Panc1 (cell line): ENCODE measurements at regions of chr11 and their contacts with region 1.

Region 1: DNA sequence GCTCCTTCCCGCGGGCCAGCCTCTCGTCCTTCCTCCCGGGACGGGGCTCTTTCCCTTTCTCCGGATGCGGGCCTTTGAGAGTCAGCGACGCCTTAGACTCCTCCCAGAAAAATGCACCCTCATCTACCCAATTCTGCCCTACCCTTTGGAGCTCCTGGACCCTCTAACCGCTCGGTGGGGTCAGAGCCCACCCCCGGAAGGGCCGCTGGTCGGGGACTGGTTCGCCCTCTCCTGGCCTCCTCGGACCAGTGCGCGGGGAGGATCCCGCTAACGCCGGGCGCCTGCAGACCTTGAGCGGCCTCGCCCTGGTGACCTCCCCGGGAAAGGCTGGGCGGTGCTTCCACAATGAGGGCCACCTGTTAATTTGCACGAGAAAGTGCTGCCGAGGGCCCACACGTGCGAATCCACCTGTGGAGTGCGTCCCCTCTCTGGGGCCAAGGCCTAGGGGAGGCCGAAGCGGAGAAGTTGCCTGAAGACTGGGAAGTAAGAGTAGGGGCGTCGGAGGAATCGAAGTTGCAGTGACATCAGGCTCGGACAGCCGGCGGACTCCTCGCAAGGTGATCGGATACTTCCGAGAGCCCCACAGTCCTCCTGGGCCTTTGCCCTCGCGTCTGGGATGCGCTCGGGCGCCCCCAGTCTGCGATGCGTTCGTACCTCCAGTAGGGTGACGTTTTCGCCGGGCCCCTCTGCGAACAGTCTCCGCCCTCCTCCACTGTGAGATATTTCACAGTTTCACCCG is 61.5 kb downstream of the ENDOD1 start:
- DNase-seq: peak; percentile 86
- ATAC-seq: peak; percentile 89
- H3K4me3 ChIP-seq: peak overlapping the region; percentile 57 to 70
- H3K27ac ChIP-seq: peak overlapping the region; percentile 70
- H3K4me1 ChIP-seq: peaks cover 23% of the 10 kb centered on the region
- H3K27me3 ChIP-seq: no peaks in the 10 kb centered on the region
- CTCF ChIP-seq: peak; percentile 97

Region 2: GRCh38 chr11:94973099-94973968 is 177.8 kb before region 1 on chr11 and contains the starts of genes CWC15 and KDM4D:
- CTCF ChIA-PET with region 1: no interaction called
- POLR2A ChIA-PET with region 1: no interaction called
- in situ Hi-C with region 1: no loop called
- intact Hi-C with region 1: loop called (anchors 10 kb)
- DNase-seq: peak; percentile 75
- ATAC-seq: peak; percentile 100
- H3K4me3 ChIP-seq: peak within 1 kb of the TSS; percentile 93
- H3K27ac ChIP-seq: peak within 1 kb of the TSS; percentile 99
- H3K4me1 ChIP-seq: peaks cover 10% of the 10 kb centered on the region; the same call in 1 of the 2 replicates
- H3K27me3 ChIP-seq: no peaks in the 10 kb centered on the region
- CTCF ChIP-seq: no peak
- total RNA-seq, gene CWC15: 58.9 TPM
- total RNA-seq, gene KDM4D: 0.87 TPM

Region 3: GRCh38 chr11:95067039-95067840 is 83.9 kb before region 1 on chr11:
- CTCF ChIA-PET with region 1: interaction called, 3 read pairs
- POLR2A ChIA-PET with region 1: no interaction called
- in situ Hi-C with region 1: no loop called
- intact Hi-C with region 1: loop called (anchors 2 kb)
- DNase-seq: peak; percentile 36
- ATAC-seq: peak; percentile 88
- H3K4me3 ChIP-seq: peak overlapping the region; percentile 83 to 90
- H3K27ac ChIP-seq: peak overlapping the region; percentile 94
- H3K4me1 ChIP-seq: peaks cover 8% of the 10 kb centered on the region; the same call in 1 of the 2 replicates
- H3K27me3 ChIP-seq: peaks cover under 1% of the 10 kb centered on the region; the same call in 1 of the 2 replicates
- CTCF ChIP-seq: peak; percentile 64

Region 4: DNA sequence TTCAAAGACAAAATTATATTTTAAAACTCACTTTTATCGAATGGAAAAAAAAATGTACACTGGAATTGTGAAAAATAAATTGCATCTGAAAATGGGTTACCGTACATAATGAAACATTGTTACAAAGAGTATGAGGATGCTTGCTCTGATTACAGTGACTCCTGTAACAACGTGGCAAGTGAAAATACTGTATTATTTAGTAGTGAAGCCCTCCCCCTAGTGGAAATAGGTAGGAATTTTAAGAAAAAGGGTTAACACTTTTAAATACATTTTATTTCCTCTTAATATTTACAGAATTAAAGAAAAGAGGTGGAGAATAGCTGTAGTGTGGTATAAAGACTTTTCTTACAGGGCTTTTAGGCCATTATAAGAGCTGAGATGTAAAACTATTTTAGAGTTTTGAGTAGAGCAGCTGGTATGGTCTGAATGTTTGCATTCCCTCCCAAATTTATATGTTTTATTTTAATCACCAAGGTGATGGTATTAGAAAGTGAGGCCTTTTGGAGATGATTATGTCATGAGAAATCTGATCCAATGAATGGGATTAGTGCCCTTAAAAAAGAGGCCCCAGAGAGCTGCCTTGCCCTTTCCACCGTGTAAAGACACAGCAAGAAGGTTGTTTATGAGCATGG is 613.3 kb after region 1 on chr11:
- CTCF ChIA-PET with region 1: interaction called, 4 read pairs
- POLR2A ChIA-PET with region 1: no interaction called
- in situ Hi-C with region 1: no loop called
- intact Hi-C with region 1: loop called (anchors 1 kb)
- DNase-seq: no peak
- ATAC-seq: peak; percentile 76; the same call in 1 of the 2 replicates
- H3K4me3 ChIP-seq: no peak overlapping the region
- H3K27ac ChIP-seq: no peak overlapping the region
- H3K4me1 ChIP-seq: no peaks in the 10 kb centered on the region
- H3K27me3 ChIP-seq: peaks cover 6% of the 10 kb centered on the region; the same call in 1 of the 2 replicates
- CTCF ChIP-seq: peak; percentile 74; the same call in 1 of the 2 replicates